ENCODE measurements at regions of chr9 and their contacts with region 1.

Region 1: GRCh38 chr9:99057665-99058625 is 47.0 kb upstream of the TGFBR1 start:
- DNase-seq: peak; percentile 73
- ATAC-seq: peak; percentile 61
- H3K4me3 Mint-ChIP-seq: peak overlapping the region; percentile 85
- H3K27ac Mint-ChIP-seq: peak overlapping the region; percentile 97
- H3K4me1 Mint-ChIP-seq: peaks cover 55% of the 10 kb centered on the region
- H3K27me3 Mint-ChIP-seq: peaks cover 2% of the 10 kb centered on the region

Region 2: DNA sequence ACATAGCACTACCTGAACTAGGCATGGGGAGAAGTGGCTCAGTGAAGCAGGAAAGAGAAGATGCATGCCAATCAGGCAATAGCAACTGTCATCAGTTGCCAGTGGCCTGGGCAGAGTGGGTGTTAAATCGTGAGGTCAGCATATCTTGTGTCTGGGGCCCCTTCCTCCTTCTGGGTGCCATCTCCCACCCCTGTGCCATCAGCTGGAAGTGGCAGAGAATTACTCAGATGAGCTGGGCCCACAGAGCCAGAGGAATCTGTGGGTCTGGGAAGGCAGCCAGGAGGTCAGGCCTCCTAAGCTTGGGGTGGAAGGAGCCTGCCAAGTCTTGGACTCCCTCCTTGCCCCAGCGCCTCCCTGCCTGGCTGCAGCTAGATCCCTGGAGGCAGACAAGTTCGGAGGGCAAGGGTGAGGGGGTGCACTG is 184.0 kb before region 1 on chr9:
- POLR2A ChIA-PET with region 1: no interaction called
- DNase-seq: no peak
- ATAC-seq: no peak
- H3K4me3 Mint-ChIP-seq: no peak overlapping the region
- H3K27ac Mint-ChIP-seq: no peak overlapping the region
- H3K4me1 Mint-ChIP-seq: no peaks in the 10 kb centered on the region
- H3K27me3 Mint-ChIP-seq: peaks cover 7% of the 10 kb centered on the region

Region 3: DNA sequence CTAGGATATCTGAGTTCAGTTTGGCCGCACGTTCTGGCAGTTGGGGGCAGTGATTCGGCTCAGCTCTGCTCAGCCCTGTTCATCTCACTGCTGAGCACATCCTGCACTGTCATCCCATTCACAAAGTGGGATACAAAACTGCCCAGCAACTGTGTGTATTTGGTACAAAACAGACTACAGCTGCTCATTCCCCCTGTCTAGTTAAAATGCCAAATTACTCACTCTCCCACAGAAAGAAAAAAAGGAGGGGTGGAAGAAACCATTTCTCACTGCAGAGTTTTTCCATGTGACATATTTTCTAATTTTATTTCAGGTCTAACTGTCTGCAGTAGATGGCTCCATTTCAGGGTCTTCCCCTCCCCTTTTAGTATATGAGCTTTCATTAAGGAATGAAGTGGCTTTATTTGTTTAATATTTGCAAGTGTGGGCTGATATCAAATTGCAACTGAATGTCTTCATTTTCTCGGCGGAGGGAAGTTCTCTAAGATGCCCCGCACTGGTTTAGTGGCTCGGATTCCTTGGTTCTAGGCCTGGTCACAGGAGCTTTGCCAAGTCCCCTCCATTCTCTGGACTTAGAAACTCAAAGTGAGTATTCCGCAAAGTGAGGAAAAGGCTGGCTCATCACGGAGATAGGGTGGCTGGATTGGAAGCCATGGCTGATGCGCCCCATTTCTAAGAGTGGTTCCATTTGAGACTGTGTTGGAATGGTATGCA is 99.5 kb before region 1 on chr9:
- POLR2A ChIA-PET with region 1: no interaction called
- DNase-seq: no peak
- ATAC-seq: no peak
- H3K4me3 Mint-ChIP-seq: no peak overlapping the region
- H3K27ac Mint-ChIP-seq: no peak overlapping the region
- H3K4me1 Mint-ChIP-seq: no peaks in the 10 kb centered on the region
- H3K27me3 Mint-ChIP-seq: peaks cover 10% of the 10 kb centered on the region

Region 4: GRCh38 chr9:99012942-99013512 is 44.9 kb before region 1 on chr9:
- POLR2A ChIA-PET with region 1: interaction called, 38 read pairs
- DNase-seq: peak; percentile 50
- ATAC-seq: peak; percentile 56
- H3K4me3 Mint-ChIP-seq: peak overlapping the region; percentile 71
- H3K27ac Mint-ChIP-seq: peak overlapping the region; percentile 96
- H3K4me1 Mint-ChIP-seq: peaks cover 27% of the 10 kb centered on the region
- H3K27me3 Mint-ChIP-seq: peaks cover 2% of the 10 kb centered on the region

Region 5: GRCh38 chr9:99069075-99069474 is 11.1 kb after region 1 on chr9:
- POLR2A ChIA-PET with region 1: interaction called, 35 read pairs
- DNase-seq: no peak
- ATAC-seq: peak; percentile 60
- H3K4me3 Mint-ChIP-seq: peak overlapping the region; percentile 18
- H3K27ac Mint-ChIP-seq: peak overlapping the region; percentile 90
- H3K4me1 Mint-ChIP-seq: peaks cover 38% of the 10 kb centered on the region
- H3K27me3 Mint-ChIP-seq: no peaks in the 10 kb centered on the region

Region 6: DNA sequence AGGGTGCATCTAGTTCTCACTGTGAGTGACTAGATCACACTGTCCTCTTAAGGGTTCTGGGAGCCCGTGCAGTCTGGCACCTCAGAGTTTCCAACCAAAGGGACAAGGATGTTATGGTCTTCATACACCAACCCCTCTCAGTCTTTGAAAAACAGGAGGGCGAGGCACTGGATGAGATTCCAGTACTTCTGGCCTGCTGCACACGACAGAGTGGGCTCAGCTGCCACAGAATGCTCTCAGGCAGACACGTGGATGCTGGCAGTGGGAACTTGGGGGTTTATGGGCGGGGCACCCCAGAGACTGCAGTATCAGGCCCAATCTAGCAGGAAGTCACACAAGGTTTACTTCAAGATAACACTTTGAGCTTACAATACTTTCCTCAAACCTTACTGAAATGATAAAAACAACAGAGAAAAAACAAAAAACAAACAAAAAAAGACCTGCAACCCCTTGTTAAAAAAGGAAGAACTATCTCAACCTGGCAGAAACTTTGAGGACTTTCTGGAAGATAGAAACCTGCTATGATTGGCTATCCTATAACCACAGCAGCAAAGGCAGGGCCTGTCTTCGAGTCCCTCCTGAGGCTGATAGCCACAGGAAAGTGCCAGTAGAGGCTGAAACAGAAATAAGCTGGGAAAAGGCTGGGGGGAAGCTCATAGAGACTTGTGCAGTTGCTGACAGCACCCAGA is 18.7 kb after region 1 on chr9:
- POLR2A ChIA-PET with region 1: interaction called, 35 read pairs
- DNase-seq: peak; percentile 65
- ATAC-seq: peak; percentile 95
- H3K4me3 Mint-ChIP-seq: peak overlapping the region; percentile 53
- H3K27ac Mint-ChIP-seq: peak overlapping the region; percentile 89
- H3K4me1 Mint-ChIP-seq: peaks cover 38% of the 10 kb centered on the region
- H3K27me3 Mint-ChIP-seq: peaks cover 2% of the 10 kb centered on the region

Region 7: DNA sequence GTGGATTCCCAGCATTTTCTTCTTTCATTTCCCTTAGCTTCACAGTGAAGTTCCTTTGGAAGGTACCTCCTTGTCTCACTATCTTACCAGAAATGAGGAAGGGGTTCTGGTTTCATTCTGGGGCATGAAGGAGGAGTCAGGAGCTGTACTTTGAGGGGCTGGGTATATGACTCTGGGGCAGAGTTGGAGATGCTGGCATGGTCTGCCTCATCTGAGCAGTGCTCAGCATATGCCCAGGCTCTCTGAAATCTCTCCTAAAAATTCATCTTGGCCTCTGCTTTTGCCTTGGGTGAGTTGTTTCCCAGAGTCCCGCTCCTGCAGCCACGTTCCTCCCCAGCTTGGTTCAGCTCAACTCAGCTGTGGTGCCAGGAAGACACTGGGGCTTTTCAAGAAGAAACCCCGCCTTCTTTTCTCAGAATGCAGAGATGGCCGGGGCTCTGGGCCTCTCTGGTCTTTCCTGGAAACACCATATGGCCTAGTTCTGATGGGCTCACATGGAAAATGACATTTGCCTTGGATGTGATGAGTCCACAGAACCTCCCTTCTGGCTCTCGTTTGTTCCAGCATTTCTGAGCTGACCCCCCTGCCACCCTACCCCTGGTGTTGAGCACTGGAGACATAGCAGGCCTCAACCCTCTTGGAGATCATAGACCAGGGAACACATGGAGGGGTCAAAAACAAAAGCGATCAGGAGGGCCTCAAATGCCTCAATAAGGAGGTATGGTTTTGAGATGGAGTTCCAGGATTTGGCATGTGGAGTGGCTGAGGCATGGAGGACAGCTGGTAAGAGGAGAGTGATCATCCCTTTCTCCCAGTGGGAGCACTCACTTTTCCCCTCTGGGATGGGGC is 34.9 kb after region 1 on chr9:
- POLR2A ChIA-PET with region 1: interaction called, 62 read pairs
- DNase-seq: peak; percentile 65
- ATAC-seq: peak; percentile 83
- H3K4me3 Mint-ChIP-seq: peak overlapping the region; percentile 74
- H3K27ac Mint-ChIP-seq: peak overlapping the region; percentile 93
- H3K4me1 Mint-ChIP-seq: peaks cover 63% of the 10 kb centered on the region
- H3K27me3 Mint-ChIP-seq: no peaks in the 10 kb centered on the region